ENCODE measurements at regions of chr15 and their contacts with region 1.

Region 1: GRCh38 chr15:49155110-49155833 is at the start of gene COPS2:
- DNase-seq: peak; percentile 88 to 95 (median 93)
- H3K4me3 ChIP-seq: peak within 1 kb of the TSS; percentile 73
- H3K4me3 Mint-ChIP-seq: peak within 1 kb of the TSS; percentile 98 to 100 (median 99)
- H3K27ac ChIP-seq: peak within 1 kb of the TSS; percentile 92
- H3K27ac Mint-ChIP-seq: peak within 1 kb of the TSS; percentile 94 to 100 (median 99)
- H3K4me1 ChIP-seq: peaks cover 41% of the 10 kb centered on the region
- H3K4me1 Mint-ChIP-seq: peaks cover 55 to 71% (median 71%) of the 10 kb centered on the region in 3 donors
- H3K27me3 ChIP-seq: no peaks in the 10 kb centered on the region
- H3K27me3 Mint-ChIP-seq: peaks cover 0 to 3% of the 10 kb centered on the region in 2 donors
- total RNA-seq, gene COPS2: 94.5 to 101 TPM

Region 2: GRCh38 chr15:49169880-49170597 is 14.8 kb after region 1 on chr15 and contains the start of gene GALK2:
- CTCF ChIA-PET with region 1: interaction called, 6 read pairs
- POLR2A ChIA-PET with region 1: interaction called, 21 read pairs
- DNase-seq: peak; percentile 78 to 84 (median 81)
- H3K4me3 ChIP-seq: peak within 1 kb of the TSS; percentile 94
- H3K4me3 Mint-ChIP-seq: peak within 1 kb of the TSS; percentile 93 to 100 (median 97)
- H3K27ac ChIP-seq: peak within 1 kb of the TSS; percentile 93
- H3K27ac Mint-ChIP-seq: peak within 1 kb of the TSS; percentile 94 to 100 (median 98)
- H3K4me1 ChIP-seq: peaks cover 31% of the 10 kb centered on the region
- H3K4me1 Mint-ChIP-seq: peaks cover 34 to 56% (median 52%) of the 10 kb centered on the region in 3 donors
- H3K27me3 ChIP-seq: no peaks in the 10 kb centered on the region
- H3K27me3 Mint-ChIP-seq: no peaks in the 10 kb centered on the region
- total RNA-seq, gene GALK2: 26.2 to 28.0 TPM

Measured in CD8-positive, alpha-beta memory T cell (primary cell).